ENCODE measurements at regions of chr11 and their contacts with region 1.

Region 1: DNA sequence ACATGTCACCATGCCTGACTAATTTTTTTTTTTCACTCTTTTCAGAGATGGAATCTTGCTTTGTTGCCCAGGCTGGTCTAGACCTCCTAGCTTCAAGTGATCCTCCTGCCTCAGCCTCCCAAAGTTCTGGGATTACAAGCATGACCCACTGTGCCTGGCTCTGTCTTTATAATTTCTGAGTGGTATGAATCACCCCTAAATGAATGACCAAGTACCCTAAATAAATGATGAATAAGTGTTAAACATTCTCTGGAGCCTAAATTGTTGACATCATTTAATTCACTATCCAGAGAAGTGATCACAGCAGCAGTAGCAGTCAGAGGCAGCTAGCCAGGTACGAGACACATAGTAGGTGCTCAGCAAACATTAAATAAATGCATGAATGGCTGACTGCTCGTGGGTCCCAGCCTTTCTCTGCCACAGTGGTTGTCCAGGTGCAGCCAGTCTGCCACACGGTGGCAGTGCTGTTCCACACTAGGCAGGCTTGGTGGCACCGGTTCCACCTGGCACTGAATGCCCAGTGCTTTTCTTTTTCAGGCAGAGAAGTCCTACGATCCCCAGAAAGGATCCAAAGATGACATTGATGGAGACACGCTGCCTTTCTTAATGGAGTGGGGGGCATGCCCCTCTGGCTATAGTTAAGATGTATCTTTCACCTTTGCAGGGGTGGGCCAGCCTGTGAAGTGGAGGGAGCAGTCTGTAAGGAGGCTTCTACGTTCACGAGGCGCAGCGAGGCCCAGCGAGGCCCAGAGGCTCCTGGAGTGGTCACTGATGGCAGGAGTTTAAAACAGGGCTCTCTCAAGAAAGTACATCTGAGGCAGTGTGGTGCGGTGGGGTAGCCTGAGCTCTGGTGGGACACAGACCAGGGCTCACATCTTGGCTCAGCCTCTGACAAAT is 8.7 kb upstream of the TTC12 start:
- DNase-seq: peak; percentile 81
- H3K4me3 ChIP-seq: peak overlapping the region in 1 of 2 experiments; percentile 14; a peak in 1 of 4 replicates
- H3K27ac ChIP-seq: no peak overlapping the region
- H3K4me1 ChIP-seq: peaks cover 0 to 2% of the 10 kb centered on the region in 2 experiments; a peak in 1 of 4 replicates
- H3K27me3 ChIP-seq: no peaks in the 10 kb centered on the region
- CTCF ChIP-seq: peak; percentile 94
- EP300 ChIP-seq: no peak
- RAD21 ChIP-seq: peak; percentile 99

Region 2: DNA sequence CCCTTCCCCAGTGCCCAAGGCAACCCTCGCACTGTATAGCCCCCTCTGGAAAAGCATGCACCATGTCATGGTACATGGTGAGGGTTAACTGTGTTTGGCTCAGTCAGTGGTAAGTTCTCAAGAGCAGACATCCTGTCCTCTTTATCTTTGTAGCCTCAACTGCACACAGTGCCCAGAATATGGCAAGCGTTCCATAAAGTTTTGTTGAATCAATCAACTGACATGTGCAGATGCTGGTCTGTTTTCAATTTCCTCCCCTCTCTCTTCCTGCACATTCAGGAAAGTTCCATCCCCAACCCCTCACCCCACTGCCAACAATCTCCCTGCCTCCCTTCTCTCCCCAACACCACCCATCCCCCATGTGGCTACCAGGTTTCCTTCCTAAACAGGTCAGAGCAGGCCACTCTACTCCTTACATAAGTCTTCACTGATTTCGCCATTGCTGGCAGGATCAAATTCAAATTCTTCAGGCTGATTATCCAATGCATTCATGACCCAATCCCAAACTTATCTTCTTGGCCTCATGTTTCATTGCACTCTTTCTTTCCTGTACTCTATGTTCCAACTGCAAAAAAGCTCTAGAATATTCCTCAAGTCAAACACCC is 415.9 kb after region 1 on chr11:
- CTCF ChIA-PET with region 1: interaction called, 12 read pairs
- POLR2A ChIA-PET with region 1: no interaction called
- DNase-seq: no peak
- H3K4me3 ChIP-seq: no peak overlapping the region
- H3K27ac ChIP-seq: no peak overlapping the region
- H3K4me1 ChIP-seq: peaks cover 0 to 13% of the 10 kb centered on the region in 2 experiments; a peak in 2 of 4 replicates
- H3K27me3 ChIP-seq: no peaks in the 10 kb centered on the region
- CTCF ChIP-seq: no peak
- EP300 ChIP-seq: no peak
- RAD21 ChIP-seq: no peak

Region 3: GRCh38 chr11:114366331-114367243 is 1060.9 kb after region 1 on chr11:
- CTCF ChIA-PET with region 1: no interaction called
- POLR2A ChIA-PET with region 1: no interaction called
- DNase-seq: no peak
- H3K4me3 ChIP-seq: peak overlapping the region in 1 of 2 experiments; percentile 3; a peak in 1 of 4 replicates
- H3K27ac ChIP-seq: peak overlapping the region; percentile 72 to 88; a peak in 3 of 4 replicates
- H3K4me1 ChIP-seq: peaks cover 15 to 24% of the 10 kb centered on the region in 2 experiments
- H3K27me3 ChIP-seq: no peaks in the 10 kb centered on the region
- CTCF ChIP-seq: no peak
- EP300 ChIP-seq: peak in 1 of 2 experiments; percentile 91; a peak in 1 of 4 replicates
- RAD21 ChIP-seq: no peak